A549 (cell line): ENCODE measurements at regions of chr9 and their contacts with region 1.

Region 1: DNA sequence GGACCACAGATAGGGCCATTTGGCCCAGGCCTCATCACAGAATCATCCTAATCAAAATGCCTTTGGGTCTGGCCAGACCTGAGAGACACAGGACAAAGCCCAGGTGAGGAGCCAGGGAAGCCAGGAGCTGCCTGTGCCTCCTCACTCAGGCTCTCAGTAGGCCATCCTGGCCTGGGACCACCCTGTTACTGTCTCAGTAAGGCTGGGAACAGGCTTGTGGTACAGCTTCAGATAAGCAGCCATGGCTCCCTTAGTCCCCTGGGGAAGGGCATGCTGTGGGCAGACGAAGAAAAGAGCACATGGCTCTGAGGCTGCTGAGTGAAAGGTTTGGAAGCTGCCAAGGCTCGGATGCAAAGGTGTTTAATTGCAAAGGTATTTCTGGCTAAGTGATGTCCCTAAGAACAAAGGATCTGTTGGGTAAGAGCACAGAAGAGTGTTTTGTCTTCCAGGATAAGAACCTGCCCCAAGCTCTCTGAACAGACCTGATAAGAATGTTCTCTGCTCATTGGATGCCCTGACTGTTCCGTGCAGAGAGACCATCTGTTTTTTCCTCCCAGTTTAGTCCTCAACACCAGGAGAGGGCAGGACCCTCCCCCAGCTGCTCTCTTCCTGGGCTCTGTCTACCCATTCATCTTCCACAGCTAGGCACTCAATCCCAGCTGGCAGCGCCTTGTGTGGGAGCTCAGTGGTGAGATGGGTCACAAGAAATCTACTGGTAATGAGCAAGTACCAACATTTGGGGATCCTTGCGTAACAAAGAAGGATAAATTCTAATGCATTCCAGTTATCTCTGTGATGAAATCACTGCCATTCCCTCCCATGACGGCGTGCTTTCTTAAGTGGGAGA is 17.7 kb downstream of the ANGPTL2 start:
- DNase-seq: no peak
- ATAC-seq: no peak
- H3K4me3 ChIP-seq: no peak overlapping the region
- H3K27ac ChIP-seq: no peak overlapping the region
- H3K4me1 ChIP-seq: no peaks in the 10 kb centered on the region; the same call in 2 of the 3 replicates
- CTCF ChIP-seq: no peak
- EP300 ChIP-seq: no peak
- POLR2A ChIP-seq: no peak
- RAD21 ChIP-seq: no peak

Region 2: DNA sequence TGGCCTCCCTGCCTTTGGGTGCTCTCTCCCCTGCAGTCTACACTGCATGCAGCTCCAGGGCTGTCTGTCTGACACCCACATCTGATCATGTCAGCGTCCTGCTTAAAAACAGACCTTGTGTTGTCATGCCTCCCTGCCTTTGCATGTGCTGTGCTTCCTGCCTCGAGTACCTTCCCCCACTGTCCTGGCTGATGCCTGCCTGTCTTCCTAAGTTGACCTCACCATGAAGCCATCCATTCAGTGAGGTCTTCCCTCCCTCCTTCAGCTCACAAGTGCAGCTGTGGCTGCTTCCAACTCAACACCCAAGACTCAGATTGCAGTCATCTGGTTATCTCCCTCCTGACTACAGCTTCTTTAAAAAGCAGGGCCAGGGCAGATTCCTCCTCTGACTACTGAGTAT is 12.3 kb after region 1 on chr9:
- CTCF ChIA-PET with region 1: interaction called, 11 read pairs
- POLR2A ChIA-PET with region 1: interaction called, 3 read pairs
- DNase-seq: no peak
- ATAC-seq: no peak
- H3K4me3 ChIP-seq: no peak overlapping the region
- H3K27ac ChIP-seq: no peak overlapping the region
- H3K4me1 ChIP-seq: peaks cover 17% of the 10 kb centered on the region; the same call in 2 of the 3 replicates
- CTCF ChIP-seq: no peak
- EP300 ChIP-seq: no peak
- POLR2A ChIP-seq: no peak
- RAD21 ChIP-seq: no peak

Region 3: GRCh38 chr9:127444921-127445850 is 340.5 kb after region 1 on chr9:
- CTCF ChIA-PET with region 1: no interaction called
- POLR2A ChIA-PET with region 1: no interaction called
- DNase-seq: peak in 1 of 2 experiments; percentile 55
- ATAC-seq: peak; percentile 31 to 36
- H3K4me3 ChIP-seq: no peak overlapping the region
- H3K27ac ChIP-seq: no peak overlapping the region
- H3K4me1 ChIP-seq: peaks cover 7% of the 10 kb centered on the region; the same call in 2 of the 3 replicates
- CTCF ChIP-seq: no peak
- EP300 ChIP-seq: no peak
- POLR2A ChIP-seq: no peak
- RAD21 ChIP-seq: no peak